Activated naive CD4-positive, alpha-beta T cell treated with anti-CD3 and anti-CD28 coated beads for 36 hours (primary cell): ENCODE measurements at regions of chr11 and their contacts with region 1.

Region 1: DNA sequence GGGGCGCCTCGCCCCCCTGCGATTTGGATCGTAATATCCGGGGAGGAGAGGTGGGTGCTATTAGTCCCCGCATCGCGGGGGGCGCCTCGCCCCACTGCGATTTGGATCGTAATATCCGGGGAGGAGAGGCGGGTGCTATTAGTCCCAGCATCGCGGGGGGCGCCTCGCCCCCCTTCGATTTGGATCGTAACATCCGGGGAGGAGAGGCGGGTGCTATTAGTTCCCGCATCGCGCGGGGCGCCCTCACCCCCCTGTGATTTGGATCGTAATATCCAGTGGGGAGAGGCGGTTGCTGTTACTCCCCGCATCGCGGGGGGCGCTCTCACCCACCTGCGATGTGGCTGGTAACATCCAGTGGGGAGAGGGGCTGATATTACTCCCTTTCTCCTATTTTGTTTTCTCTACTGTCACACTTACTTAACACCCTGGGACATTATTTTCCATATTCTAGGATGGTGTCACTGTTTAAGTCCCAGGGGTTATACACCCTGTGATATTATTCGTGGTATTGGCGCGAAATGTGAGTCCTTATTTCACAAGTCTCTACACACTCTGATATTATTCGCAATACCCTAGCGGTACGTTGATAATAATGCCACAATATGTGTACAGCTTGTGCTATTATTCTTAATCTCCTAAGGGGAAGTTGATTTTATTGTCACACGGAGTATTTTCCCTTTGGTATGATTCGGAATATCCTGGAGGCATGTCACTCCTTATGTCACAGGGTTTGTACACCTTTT is 57.8 kb upstream of the ALDH3B2 start:
- DNase-seq: peak; percentile 54
- H3K4me3 Mint-ChIP-seq: no peak overlapping the region
- H3K27ac Mint-ChIP-seq: no peak overlapping the region
- H3K4me1 Mint-ChIP-seq: peaks cover 19% of the 10 kb centered on the region
- H3K27me3 Mint-ChIP-seq: peaks cover 16% of the 10 kb centered on the region

Region 2: GRCh38 chr11:67136156-67136555 is 596.1 kb before region 1 on chr11:
- CTCF ChIA-PET with region 1: no interaction called
- intact Hi-C with region 1: no loop called
- DNase-seq: no peak
- H3K4me3 Mint-ChIP-seq: no peak overlapping the region
- H3K27ac Mint-ChIP-seq: no peak overlapping the region
- H3K4me1 Mint-ChIP-seq: peaks cover 7% of the 10 kb centered on the region
- H3K27me3 Mint-ChIP-seq: no peaks in the 10 kb centered on the region

Region 3: DNA sequence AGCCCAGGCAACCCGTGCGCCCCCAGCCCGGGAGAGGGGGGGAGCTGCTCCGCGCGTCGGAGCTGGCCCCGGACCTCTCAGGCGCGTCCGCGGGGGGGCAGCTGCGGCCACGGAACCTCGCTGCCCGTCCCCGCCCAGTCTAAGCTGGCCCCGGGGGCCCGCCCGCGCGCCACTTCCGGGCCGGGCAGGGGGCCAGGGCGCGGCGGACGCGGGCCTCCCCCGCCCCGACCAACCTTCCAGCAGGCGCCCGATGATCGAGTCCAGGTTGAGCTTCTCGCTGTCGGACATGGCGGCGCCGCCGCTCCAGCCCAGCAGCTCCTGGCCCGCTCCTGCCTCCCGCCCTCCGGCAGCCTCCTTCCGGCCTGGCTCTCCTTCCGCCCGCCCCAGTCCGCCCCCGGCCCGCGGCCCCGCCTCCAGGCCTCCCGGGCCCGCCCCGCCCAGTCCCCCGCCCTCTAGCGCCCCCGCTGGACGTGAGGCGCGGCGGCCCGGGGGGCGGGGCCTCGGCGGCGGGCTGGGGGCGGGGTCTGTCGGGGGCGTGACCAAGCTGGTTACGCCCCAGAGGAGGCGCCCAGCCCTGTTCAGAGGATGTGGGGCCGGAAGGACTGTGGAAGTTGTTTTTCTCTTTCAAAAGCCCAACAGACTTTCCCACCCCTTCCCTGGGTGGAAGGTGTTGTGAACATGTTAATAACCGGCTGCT is 330.6 kb before region 1 on chr11 and contains the start of gene PPP1CA:
- CTCF ChIA-PET with region 1: no interaction called
- intact Hi-C with region 1: no loop called
- DNase-seq: peak; percentile 91
- H3K4me3 Mint-ChIP-seq: peak within 1 kb of the TSS; percentile 72
- H3K27ac Mint-ChIP-seq: peak within 1 kb of the TSS; percentile 92
- H3K4me1 Mint-ChIP-seq: peaks cover 60% of the 10 kb centered on the region
- H3K27me3 Mint-ChIP-seq: no peaks in the 10 kb centered on the region
- total RNA-seq, gene PPP1CA: 202 to 204 TPM

Region 4: DNA sequence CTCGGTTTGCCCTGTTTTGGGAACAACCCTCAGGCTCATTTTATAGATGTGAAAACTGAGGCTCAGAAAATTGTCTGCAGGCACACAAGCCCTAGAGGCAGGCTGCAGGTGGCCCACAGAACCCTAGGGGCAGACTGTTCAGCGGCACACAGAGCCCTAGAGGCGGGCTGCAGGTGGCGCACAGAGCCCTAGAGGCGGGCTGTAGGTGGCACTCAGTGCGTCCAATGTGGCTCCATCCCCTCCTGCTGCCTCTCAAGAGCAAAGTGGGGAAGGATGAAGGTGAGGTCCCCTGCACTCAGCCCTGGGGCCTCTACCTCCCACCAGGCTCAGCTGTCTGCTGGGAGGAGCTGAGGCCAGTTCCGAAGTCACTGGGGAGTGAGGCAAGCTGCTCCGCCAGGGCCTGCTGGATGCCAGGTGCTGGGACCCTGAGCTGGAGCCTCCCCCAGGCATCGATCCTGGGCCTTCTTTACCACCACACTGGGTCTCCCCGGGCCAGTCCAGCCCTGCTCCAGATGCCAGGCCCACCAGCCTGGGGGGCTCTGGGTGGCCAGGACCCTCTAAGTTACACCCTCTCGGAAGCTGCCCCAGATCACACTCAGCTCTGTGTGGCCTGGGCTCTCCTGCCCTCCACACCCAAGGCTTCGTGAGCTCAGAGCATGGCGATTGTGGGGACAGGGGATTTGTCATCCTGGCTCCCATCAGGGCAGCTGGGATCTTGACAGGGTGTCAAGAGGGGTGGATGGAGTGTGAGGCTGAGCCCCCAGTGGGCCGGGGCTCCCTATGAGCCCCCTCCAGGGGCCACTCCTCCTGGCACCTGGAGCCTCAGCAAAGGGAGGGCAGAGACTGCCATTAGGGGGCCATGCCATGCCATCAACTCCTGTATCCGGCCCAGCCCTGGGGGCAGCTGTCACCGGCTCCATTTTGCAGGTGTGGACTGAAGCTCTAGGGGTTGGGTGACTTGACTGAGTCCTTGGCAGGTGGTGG is 83.8 kb before region 1 on chr11:
- CTCF ChIA-PET with region 1: no interaction called
- intact Hi-C with region 1: loop called (anchors 5 kb)
- DNase-seq: peak; percentile 69
- H3K4me3 Mint-ChIP-seq: no peak overlapping the region
- H3K27ac Mint-ChIP-seq: no peak overlapping the region
- H3K4me1 Mint-ChIP-seq: peaks cover 32% of the 10 kb centered on the region
- H3K27me3 Mint-ChIP-seq: peaks cover 2% of the 10 kb centered on the region